ENCODE measurements at regions of chr3 and their contacts with region 1.

Region 1: GRCh38 chr3:10192953-10193691 is 28.4 kb downstream of the IRAK2 start:
- DNase-seq: peak; percentile 84
- H3K4me3 Mint-ChIP-seq: peak overlapping the region; percentile 35
- H3K27ac Mint-ChIP-seq: peak overlapping the region; percentile 97
- H3K4me1 Mint-ChIP-seq: peaks cover 83% of the 10 kb centered on the region
- H3K27me3 Mint-ChIP-seq: no peaks in the 10 kb centered on the region

Region 2: GRCh38 chr3:10085736-10086135 is 107.4 kb before region 1 on chr3:
- CTCF ChIA-PET with region 1: no interaction called
- POLR2A ChIA-PET with region 1: no interaction called
- intact Hi-C with region 1: no loop called
- DNase-seq: no peak
- H3K4me3 Mint-ChIP-seq: no peak overlapping the region
- H3K27ac Mint-ChIP-seq: no peak overlapping the region
- H3K4me1 Mint-ChIP-seq: no peaks in the 10 kb centered on the region
- H3K27me3 Mint-ChIP-seq: no peaks in the 10 kb centered on the region

Region 3: GRCh38 chr3:10142707-10143566 is 50.2 kb before region 1 on chr3:
- CTCF ChIA-PET with region 1: no interaction called
- POLR2A ChIA-PET with region 1: interaction called, 10 read pairs
- intact Hi-C with region 1: loop called (anchors 2 kb)
- DNase-seq: peak; percentile 53
- H3K4me3 Mint-ChIP-seq: peak overlapping the region; percentile 96
- H3K27ac Mint-ChIP-seq: peak overlapping the region; percentile 83
- H3K4me1 Mint-ChIP-seq: peaks cover 27% of the 10 kb centered on the region
- H3K27me3 Mint-ChIP-seq: no peaks in the 10 kb centered on the region

Region 4: GRCh38 chr3:10173926-10174435 is 19.1 kb before region 1 on chr3:
- CTCF ChIA-PET with region 1: interaction called, 11 read pairs
- POLR2A ChIA-PET with region 1: no interaction called
- intact Hi-C with region 1: no loop called
- DNase-seq: peak; percentile 38
- H3K4me3 Mint-ChIP-seq: no peak overlapping the region
- H3K27ac Mint-ChIP-seq: peak overlapping the region; percentile 34
- H3K4me1 Mint-ChIP-seq: peaks cover 16% of the 10 kb centered on the region
- H3K27me3 Mint-ChIP-seq: no peaks in the 10 kb centered on the region

Region 5: GRCh38 chr3:10219737-10220136 is 26.6 kb after region 1 on chr3:
- CTCF ChIA-PET with region 1: interaction called, 5 read pairs
- POLR2A ChIA-PET with region 1: interaction called, 10 read pairs
- intact Hi-C with region 1: loop called (anchors 1 kb)
- DNase-seq: no peak
- H3K4me3 Mint-ChIP-seq: no peak overlapping the region
- H3K27ac Mint-ChIP-seq: peak overlapping the region; percentile 77
- H3K4me1 Mint-ChIP-seq: peaks cover 44% of the 10 kb centered on the region
- H3K27me3 Mint-ChIP-seq: no peaks in the 10 kb centered on the region

Region 6: DNA sequence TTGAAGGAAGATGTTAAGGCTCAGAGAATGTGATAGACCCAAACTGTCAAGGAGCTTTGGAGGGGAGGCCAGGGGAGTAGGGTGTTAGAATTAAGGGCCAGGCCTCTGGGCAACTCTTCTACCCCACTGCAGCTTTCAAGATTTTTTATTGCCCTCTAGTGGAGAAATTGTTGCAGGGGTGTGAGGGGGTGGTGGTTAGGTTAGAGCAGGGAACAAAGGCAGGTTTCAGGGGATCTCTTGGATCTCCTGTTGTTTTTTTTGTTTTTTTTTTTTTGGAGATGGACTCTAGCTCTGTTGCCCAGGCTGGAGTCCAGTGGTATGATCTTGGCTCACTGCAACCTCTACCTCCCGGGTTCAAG is 129.2 kb after region 1 on chr3:
- CTCF ChIA-PET with region 1: no interaction called
- POLR2A ChIA-PET with region 1: no interaction called
- intact Hi-C with region 1: loop called (anchors 5 kb)
- DNase-seq: peak; percentile 28
- H3K4me3 Mint-ChIP-seq: no peak overlapping the region
- H3K27ac Mint-ChIP-seq: no peak overlapping the region
- H3K4me1 Mint-ChIP-seq: peaks cover 22% of the 10 kb centered on the region
- H3K27me3 Mint-ChIP-seq: peaks cover 4% of the 10 kb centered on the region